WTC11 (cell line): ENCODE measurements at regions of chr15 and their contacts with region 1.

Region 1: DNA sequence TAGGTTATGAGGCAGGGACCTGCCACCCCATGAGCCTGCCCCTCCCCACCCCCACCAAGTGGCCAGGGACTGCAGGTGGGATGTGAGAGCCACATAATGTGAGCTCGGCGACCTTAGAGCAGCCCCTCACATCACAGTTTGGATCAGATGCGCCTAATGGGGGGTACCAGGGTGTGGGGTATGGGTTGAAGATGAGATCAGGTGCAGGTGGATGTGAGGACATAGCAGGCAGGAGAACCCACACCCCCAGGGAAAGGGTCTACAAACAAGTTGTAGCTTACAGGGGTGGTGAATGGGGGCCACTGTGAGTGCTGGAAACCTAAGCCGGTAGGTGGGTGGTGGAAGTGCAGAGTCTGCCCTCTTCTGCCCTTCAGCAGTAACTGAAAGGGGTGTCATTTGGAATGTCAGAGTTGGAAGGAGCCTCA is 94.0 kb downstream of the CORO2B start:
- DNase-seq: peak; percentile 49
- ATAC-seq: peak; percentile 71
- H3K4me3 Mint-ChIP-seq: no peak overlapping the region
- H3K27ac Mint-ChIP-seq: no peak overlapping the region
- H3K4me1 Mint-ChIP-seq: peaks cover 11% of the 10 kb centered on the region
- H3K27me3 Mint-ChIP-seq: no peaks in the 10 kb centered on the region
- CTCF ChIP-seq: no peak

Region 2: DNA sequence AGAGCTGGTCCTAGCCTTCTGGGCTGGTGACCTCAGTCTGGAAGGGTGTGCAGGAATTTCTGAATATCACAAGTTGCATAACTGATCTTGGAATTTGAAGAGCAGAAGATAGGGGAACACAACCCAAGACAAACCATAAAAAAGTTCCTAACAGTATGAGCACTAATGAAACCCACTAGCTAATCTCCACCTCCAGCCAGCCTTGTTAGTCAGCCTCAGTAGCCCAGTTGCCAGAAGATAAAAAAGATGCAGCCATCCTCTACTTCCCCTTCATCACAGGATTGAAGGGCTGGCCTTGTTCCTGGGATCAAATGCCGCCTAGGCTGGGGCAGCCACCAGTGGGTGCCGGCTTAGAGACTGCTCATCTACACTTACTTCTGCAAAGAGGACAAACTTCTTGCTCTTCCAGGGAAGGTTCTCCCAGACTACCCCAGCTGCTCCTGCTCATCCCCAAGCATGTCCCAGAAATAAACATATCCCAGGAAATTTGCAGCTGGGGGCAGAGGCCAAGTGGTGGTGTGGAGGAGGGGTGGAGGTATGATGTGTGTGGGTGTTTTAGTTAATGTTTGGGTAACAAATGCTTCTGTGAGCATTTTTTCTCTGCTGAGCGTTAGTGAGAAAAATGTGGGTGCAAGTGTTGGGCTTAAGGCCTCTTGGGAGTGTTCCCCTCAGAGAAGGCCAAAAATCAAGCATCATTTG is 231.6 kb before region 1 on chr15:
- CTCF ChIA-PET with region 1: no interaction called
- POLR2A ChIA-PET with region 1: no interaction called
- DNase-seq: no peak
- ATAC-seq: no peak
- H3K4me3 Mint-ChIP-seq: no peak overlapping the region
- H3K27ac Mint-ChIP-seq: no peak overlapping the region
- H3K4me1 Mint-ChIP-seq: peaks cover 4% of the 10 kb centered on the region; the same call in 1 of the 2 replicates
- H3K27me3 Mint-ChIP-seq: peaks cover 14% of the 10 kb centered on the region
- CTCF ChIP-seq: no peak

Region 3: GRCh38 chr15:68550481-68551295 is 122.1 kb before region 1 on chr15:
- CTCF ChIA-PET with region 1: interaction called, 174 read pairs
- POLR2A ChIA-PET with region 1: interaction called, 3 read pairs
- DNase-seq: peak; percentile 94
- ATAC-seq: peak; percentile 79
- H3K4me3 Mint-ChIP-seq: no peak overlapping the region
- H3K27ac Mint-ChIP-seq: no peak overlapping the region
- H3K4me1 Mint-ChIP-seq: no peaks in the 10 kb centered on the region
- H3K27me3 Mint-ChIP-seq: peaks cover 10% of the 10 kb centered on the region
- CTCF ChIP-seq: peak; percentile 94

Region 4: DNA sequence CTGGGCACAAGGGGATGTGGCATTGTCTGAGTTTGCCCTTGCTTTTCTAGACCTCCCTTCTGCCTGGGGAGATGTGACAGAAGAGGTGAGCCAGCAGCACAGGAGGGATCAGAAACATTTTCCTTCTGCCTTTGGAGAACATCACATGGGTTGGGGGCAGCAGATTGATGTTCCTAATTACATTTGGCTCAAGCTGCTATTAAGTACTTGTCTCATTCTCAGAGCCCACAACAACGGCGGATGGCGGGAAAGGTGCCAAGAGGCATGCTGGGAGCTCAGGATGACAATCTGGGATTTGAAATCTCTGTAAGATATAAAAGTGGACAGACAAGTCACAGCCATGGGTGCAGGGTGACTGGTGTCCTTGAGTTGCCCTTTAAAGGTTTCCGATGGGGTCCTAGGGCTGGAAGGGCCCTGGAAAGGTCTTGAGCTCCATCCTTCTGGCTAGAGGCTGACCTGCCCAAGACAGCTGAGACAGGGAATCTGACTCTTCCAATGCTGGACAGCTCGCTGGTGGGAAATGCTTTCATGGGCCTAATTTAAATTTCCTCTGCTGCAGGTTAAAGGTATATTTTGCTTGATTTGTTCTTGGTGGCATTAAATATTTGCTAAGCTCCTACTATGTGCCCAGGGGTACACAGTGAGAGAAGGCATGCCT is 96.4 kb before region 1 on chr15:
- CTCF ChIA-PET with region 1: interaction called, 46 read pairs
- POLR2A ChIA-PET with region 1: no interaction called
- DNase-seq: no peak
- ATAC-seq: no peak
- H3K4me3 Mint-ChIP-seq: no peak overlapping the region
- H3K27ac Mint-ChIP-seq: no peak overlapping the region
- H3K4me1 Mint-ChIP-seq: peaks cover 61% of the 10 kb centered on the region
- H3K27me3 Mint-ChIP-seq: peaks cover 51% of the 10 kb centered on the region
- CTCF ChIP-seq: no peak

Region 5: DNA sequence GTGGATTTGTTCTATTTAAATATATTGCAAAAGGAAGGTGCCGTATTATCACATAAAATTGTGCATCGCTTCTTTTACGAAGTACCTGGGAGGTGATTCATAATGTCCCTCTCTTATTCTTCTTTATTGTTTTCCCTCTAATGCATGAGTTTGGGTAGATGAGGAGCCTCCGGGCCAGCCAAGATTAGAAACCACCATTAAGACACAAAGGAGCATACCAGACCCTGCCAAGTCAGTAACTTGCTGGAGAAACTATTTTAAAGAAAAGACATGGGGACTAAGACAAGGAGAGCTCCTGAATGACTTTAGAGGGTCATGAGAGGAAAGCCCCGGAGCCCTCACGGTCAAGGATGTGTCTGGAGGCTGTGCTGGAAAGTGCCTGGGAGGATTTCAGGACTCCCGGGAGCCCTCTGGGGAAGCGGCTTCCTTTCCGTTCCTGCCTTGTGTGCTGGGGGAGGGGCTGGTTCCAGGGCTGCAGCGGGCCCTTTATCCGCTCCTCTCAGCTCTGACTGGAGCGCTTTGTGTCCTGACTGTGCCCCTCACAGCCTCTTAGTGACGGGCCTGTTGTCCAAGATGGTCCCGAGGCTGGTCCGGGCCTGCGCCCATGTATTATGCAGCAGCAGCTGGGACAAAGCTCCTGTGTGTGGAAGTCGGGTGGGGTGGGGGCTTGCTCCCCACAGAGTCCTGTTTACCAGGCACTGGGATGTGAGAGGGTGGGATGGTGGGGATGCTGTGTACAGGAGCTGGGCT is 58.3 kb before region 1 on chr15:
- CTCF ChIA-PET with region 1: interaction called, 22 read pairs
- POLR2A ChIA-PET with region 1: no interaction called
- DNase-seq: peak; percentile 70
- ATAC-seq: peak; percentile 94
- H3K4me3 Mint-ChIP-seq: no peak overlapping the region
- H3K27ac Mint-ChIP-seq: peak overlapping the region; percentile 14
- H3K4me1 Mint-ChIP-seq: peaks cover 44% of the 10 kb centered on the region
- H3K27me3 Mint-ChIP-seq: peaks cover 3% of the 10 kb centered on the region; the same call in 1 of the 2 replicates
- CTCF ChIP-seq: no peak

Region 6: GRCh38 chr15:68650901-68651709 is 21.7 kb before region 1 on chr15:
- CTCF ChIA-PET with region 1: interaction called, 120 read pairs
- POLR2A ChIA-PET with region 1: no interaction called
- DNase-seq: peak; percentile 98
- ATAC-seq: peak; percentile 96
- H3K4me3 Mint-ChIP-seq: peak overlapping the region; percentile 53
- H3K27ac Mint-ChIP-seq: no peak overlapping the region; the same call in 1 of the 2 replicates
- H3K4me1 Mint-ChIP-seq: peaks cover 43% of the 10 kb centered on the region
- H3K27me3 Mint-ChIP-seq: no peaks in the 10 kb centered on the region
- CTCF ChIP-seq: peak; percentile 97

Region 7: DNA sequence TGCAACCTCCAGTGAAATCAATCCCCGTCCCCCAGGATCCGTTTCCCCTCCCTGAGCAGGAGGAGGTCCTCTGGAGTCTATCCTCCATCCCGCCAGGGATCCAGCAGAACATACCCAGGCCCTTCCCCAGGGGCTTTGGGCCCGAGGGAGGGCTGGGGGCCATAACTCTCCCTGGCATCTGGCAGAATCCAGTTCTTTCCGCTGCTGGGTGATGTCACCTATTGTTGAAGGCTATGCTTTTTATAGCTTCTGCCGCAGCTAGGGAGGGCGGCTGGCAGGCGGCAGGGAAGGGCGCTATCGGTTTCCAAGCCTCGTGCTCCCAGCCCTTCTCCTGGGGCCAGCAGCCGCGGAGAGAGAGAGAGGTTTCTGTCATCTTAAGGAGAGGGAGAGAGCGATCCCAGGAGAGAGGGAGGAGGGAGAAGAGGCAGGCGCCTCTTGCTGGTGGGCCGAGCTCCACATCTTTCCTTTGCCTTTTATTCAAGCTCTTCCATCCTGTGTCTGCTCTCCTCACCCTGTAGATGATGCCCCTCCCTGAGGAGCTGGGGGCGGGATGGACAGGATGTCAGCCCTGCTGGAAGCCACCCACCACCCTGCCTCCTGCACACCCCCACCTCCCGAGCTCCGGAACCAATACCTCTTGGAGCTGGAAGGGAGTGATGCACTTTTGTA is 27.8 kb after region 1 on chr15:
- CTCF ChIA-PET with region 1: interaction called, 24 read pairs
- POLR2A ChIA-PET with region 1: no interaction called
- DNase-seq: peak; percentile 33
- ATAC-seq: peak; percentile 71
- H3K4me3 Mint-ChIP-seq: peak overlapping the region; percentile 38
- H3K27ac Mint-ChIP-seq: no peak overlapping the region; the same call in 1 of the 2 replicates
- H3K4me1 Mint-ChIP-seq: peaks cover 26% of the 10 kb centered on the region
- H3K27me3 Mint-ChIP-seq: peaks cover 4% of the 10 kb centered on the region; the same call in 1 of the 2 replicates
- CTCF ChIP-seq: no peak